Activated CD8-positive, alpha-beta T cell treated with anti-CD3 and anti-CD28 coated beads, Interleukin-2, amount 10 ng/mL, durations not matched to agents 7 days and 5 days (primary cell): ENCODE measurements at regions of chr1 and their contacts with region 1.

Region 1: DNA sequence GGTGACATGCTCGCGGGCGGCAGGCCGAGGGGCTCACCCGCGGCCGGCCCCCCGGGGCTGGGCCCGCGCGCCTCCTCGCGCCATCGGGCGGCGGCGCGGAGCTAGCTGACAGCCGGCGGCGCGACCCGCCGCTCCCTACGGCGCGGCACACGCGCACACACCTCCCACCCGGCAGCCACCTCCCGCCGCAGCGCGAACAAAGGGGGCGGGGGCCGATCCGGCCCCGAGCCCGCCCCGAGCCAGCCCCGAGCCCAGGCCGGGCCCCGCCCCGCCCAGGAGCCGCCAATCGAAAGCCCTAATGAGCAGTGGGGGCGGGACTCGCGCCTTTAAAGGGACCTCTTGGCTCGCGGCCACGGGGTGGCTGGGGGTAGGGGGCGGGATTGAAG is at the start of gene KIF21B:
- DNase-seq: peak; percentile 94
- ATAC-seq: peak; percentile 77
- H3K4me3 Mint-ChIP-seq: peak within 1 kb of the TSS; percentile 93
- H3K27ac Mint-ChIP-seq: peak within 1 kb of the TSS; percentile 100
- H3K4me1 Mint-ChIP-seq: peaks cover 62% of the 10 kb centered on the region
- H3K27me3 Mint-ChIP-seq: no peaks in the 10 kb centered on the region
- total RNA-seq, gene KIF21B: 158 to 162 TPM

Region 2: GRCh38 chr1:201009962-201010645 is 13.4 kb before region 1 on chr1:
- CTCF ChIA-PET with region 1: interaction called, 34 read pairs
- POLR2A ChIA-PET with region 1: interaction called, 8 read pairs
- DNase-seq: no peak
- ATAC-seq: no peak
- H3K4me3 Mint-ChIP-seq: no peak overlapping the region
- H3K27ac Mint-ChIP-seq: peak overlapping the region; percentile 76
- H3K4me1 Mint-ChIP-seq: peaks cover 63% of the 10 kb centered on the region
- H3K27me3 Mint-ChIP-seq: no peaks in the 10 kb centered on the region

Region 3: GRCh38 chr1:201042779-201043461 is 19.4 kb after region 1 on chr1:
- CTCF ChIA-PET with region 1: interaction called, 99 read pairs
- POLR2A ChIA-PET with region 1: interaction called, 4 read pairs
- DNase-seq: peak; percentile 79
- ATAC-seq: peak; percentile 91
- H3K4me3 Mint-ChIP-seq: no peak overlapping the region
- H3K27ac Mint-ChIP-seq: no peak overlapping the region
- H3K4me1 Mint-ChIP-seq: no peaks in the 10 kb centered on the region
- H3K27me3 Mint-ChIP-seq: peaks cover 22% of the 10 kb centered on the region

Region 4: DNA sequence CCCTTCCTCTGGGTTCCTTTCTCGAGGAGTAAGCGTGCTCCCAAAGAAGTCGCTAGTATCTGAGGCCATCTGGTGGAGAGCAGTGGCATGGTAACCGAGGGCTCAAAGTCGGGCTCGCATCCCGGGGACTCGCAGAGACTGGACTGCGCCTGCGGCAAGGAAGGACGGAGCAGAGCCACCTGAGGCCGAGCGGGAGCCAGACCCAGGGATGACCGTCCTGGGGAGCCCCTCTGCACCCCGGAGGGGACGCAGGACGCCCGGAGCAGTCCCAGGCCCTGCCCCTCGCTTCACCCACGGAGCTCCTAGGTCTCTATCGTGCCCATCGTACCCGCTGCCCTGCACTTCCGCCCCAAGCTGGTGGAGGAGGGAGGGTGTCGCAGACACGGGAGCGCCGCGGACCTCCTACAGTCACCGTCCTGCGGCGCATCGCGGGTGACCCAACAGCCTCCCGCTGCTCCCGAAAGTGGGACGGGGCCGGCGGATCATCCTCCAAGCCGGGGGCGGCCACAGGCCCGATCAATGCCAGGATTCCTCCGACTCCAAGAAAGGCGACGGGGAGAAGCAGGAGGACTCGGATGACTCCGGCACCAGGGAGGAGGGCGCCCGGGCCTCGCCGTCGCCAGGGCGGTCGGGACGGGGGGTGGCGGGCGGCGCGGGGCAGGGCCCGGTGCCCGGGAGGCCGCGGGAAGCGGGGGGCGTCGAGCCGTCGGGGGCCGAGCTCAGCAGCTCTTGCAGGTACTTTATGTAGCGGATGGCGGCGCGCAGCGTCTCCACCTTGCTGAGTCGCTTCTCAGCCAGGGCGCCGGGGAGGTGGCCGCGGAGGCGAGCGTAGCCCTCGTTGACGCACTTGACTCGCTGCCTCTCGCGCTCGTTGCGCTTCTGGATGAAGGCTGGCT is 91.0 kb after region 1 on chr1:
- CTCF ChIA-PET with region 1: interaction called, 10 read pairs
- POLR2A ChIA-PET with region 1: interaction called, 4 read pairs
- DNase-seq: peak; percentile 79
- ATAC-seq: peak; percentile 91
- H3K4me3 Mint-ChIP-seq: peak overlapping the region; percentile 74
- H3K27ac Mint-ChIP-seq: peak overlapping the region; percentile 63
- H3K4me1 Mint-ChIP-seq: peaks cover 8% of the 10 kb centered on the region
- H3K27me3 Mint-ChIP-seq: peaks cover 11% of the 10 kb centered on the region